Left ventricle myocardium superior (tissue), 1 donor: ENCODE measurements at regions of chr16 and their contacts with region 1.

Region 1: GRCh38 chr16:22694887-22695382 is 119.0 kb upstream of the HS3ST2 start:
- DNase-seq: no peak
- ATAC-seq: peak; percentile 96

Region 2: GRCh38 chr16:21580807-21581206 is 1114.1 kb before region 1 on chr16:
- intact Hi-C with region 1: loop called (anchors 2 kb)
- DNase-seq: no peak
- ATAC-seq: no peak

Region 3: GRCh38 chr16:21599233-21600030 is 1095.5 kb before region 1 on chr16 and contains the start of gene METTL9:
- intact Hi-C with region 1: no loop called
- DNase-seq: peak; percentile 97
- ATAC-seq: peak; percentile 98
- total RNA-seq, gene METTL9: 53.4 TPM

Region 4: DNA sequence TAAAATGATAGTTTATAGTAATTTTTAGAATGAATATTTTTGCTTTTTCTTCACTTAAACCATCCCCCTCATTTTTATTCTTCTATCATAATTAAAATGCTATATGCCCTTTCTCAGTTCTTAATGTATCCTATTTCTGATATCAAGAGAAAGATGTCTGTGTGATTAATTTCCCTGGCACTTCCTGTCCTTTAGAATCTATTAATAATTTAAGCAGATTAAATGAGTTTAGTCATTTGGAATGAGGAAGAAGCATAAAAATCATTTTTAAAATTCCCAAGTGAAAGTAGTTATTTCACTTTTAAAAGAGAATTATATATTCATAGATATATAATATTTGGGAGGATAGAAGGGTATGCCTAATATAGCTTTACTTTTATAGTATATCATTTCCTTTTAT is 292.7 kb before region 1 on chr16:
- intact Hi-C with region 1: no loop called
- DNase-seq: no peak
- ATAC-seq: no peak